ENCODE measurements at regions of chr2 and their contacts with region 1.

Region 1: GRCh38 chr2:27890146-27890923 is at the starts of genes BABAM2 and RBKS:
- DNase-seq: peak; percentile 91 to 96
- ATAC-seq: peak; percentile 97
- H3K4me3 ChIP-seq: peak within 1 kb of the TSS; percentile 58 to 77
- H3K27ac ChIP-seq: peak within 1 kb of the TSS; percentile 23 to 87
- H3K4me1 ChIP-seq: peaks cover 0 to under 1% of the 10 kb centered on the region in 2 donors
- H3K27me3 ChIP-seq: no peaks in the 10 kb centered on the region
- total RNA-seq, gene BABAM2: 52.3 to 53.8 TPM
- total RNA-seq, gene RBKS: 4.4 to 4.7 TPM

Region 2: GRCh38 chr2:27723372-27724144 is 166.8 kb before region 1 on chr2:
- intact Hi-C with region 1: loop called in 1 of 2 experiments (anchors 5 kb)
- DNase-seq: peak; percentile 79 to 83
- ATAC-seq: peak; percentile 78
- H3K4me3 ChIP-seq: no peak overlapping the region
- H3K27ac ChIP-seq: peak overlapping the region; percentile 95 to 97
- H3K4me1 ChIP-seq: peaks cover 2 to 6% of the 10 kb centered on the region in 2 donors
- H3K27me3 ChIP-seq: no peaks in the 10 kb centered on the region

Region 3: GRCh38 chr2:27823569-27823968 is 66.8 kb before region 1 on chr2:
- intact Hi-C with region 1: loop called in 1 of 2 experiments (anchors 10 kb)
- DNase-seq: no peak
- ATAC-seq: no peak
- H3K4me3 ChIP-seq: peak overlapping the region; percentile 38 to 72
- H3K27ac ChIP-seq: no peak overlapping the region
- H3K4me1 ChIP-seq: no peaks in the 10 kb centered on the region
- H3K27me3 ChIP-seq: no peaks in the 10 kb centered on the region